Activated T-helper 1 cell treated with anti-CD3 and anti-CD28 coated beads, Interleukin-12 subunit alpha, Interleukin-12 subunit beta, Interleukin-2, Interleukin-4 antibody, amounts not matched to agents 30 ng/mL and 10 ng/mL and 1 ng/mL, durations not matched to agents 14 hours and 24 hours and 36 hours (primary cell): ENCODE measurements at regions of chr1 and their contacts with region 1.

Region 1: GRCh38 chr1:214446772-214447556 is 104.4 kb downstream of the PTPN14 start:
- DNase-seq: no peak
- H3K4me3 Mint-ChIP-seq: no peak overlapping the region
- H3K27ac Mint-ChIP-seq: peak overlapping the region; percentile 90
- H3K4me1 Mint-ChIP-seq: peaks cover 73% of the 10 kb centered on the region
- H3K27me3 Mint-ChIP-seq: no peaks in the 10 kb centered on the region

Region 2: DNA sequence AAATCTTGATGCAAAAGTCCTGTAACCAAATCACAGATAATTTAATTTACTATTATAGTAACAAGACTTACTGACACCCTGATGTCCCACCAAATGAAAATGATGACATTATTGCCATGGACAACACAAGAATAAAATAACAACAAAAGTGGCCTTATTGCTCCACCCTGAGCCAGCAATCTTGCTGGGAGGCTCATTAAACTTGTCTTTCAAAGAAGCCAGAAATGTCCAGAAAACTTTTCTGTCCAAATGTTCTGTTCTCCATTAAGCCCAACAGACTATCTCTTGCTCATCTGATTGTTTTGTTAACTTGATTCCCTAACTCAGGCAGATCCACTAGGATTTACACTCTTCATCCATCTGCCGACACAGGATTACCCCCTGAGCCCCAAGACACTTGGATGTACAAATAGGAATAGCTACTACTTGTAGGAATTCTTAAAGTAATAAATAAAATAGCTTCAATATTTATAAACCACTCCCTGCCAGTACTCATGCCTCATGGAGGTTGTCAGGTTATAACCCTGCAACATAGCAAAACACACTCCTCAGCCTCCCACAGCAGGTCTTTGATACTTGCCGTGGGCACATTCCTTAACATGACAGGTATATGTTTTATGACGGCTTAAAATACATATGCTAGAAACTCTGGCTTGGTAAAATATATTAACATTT is 19.6 kb after region 1 on chr1:
- intact Hi-C with region 1: no loop called
- DNase-seq: no peak
- H3K4me3 Mint-ChIP-seq: no peak overlapping the region
- H3K27ac Mint-ChIP-seq: no peak overlapping the region
- H3K4me1 Mint-ChIP-seq: peaks cover 5% of the 10 kb centered on the region
- H3K27me3 Mint-ChIP-seq: peaks cover 11% of the 10 kb centered on the region

Region 3: GRCh38 chr1:214551436-214552173 is 104.6 kb after region 1 on chr1 and contains the start of gene PTPN14:
- intact Hi-C with region 1: loop called (anchors 5 kb)
- DNase-seq: no peak
- H3K4me3 Mint-ChIP-seq: peak within 1 kb of the TSS; percentile 89
- H3K27ac Mint-ChIP-seq: peak within 1 kb of the TSS; percentile 71
- H3K4me1 Mint-ChIP-seq: peaks cover 9% of the 10 kb centered on the region
- H3K27me3 Mint-ChIP-seq: peaks cover 51% of the 10 kb centered on the region
- total RNA-seq, gene PTPN14: 20.6 and 23.1 TPM in 2 replicates